Caco-2 (cell line): ENCODE measurements at regions of chrX and their contacts with region 1.

Region 1: DNA sequence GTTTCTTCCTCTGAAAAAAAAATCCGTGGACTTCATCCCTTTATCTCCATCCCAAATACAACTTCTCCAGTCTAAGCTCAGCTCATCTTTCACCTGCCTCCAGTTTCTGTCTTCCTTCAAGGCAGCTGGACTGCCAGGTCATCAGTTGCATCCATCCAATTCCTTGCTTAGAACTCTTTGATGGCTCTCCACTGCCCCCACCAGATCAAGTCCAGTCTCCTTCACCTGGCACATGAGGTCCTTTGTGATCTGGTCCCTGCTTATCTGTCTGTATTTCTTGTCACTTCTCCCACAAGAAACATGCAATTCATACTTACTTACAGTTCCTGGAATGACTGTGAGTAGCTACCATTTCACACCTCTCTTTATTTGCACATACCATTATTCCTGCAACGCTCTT is 33.8 kb downstream of the OTUD6A start:
- DNase-seq: peak in 1 of 2 experiments; percentile 2
- H3K4me3 ChIP-seq: no peak overlapping the region
- H3K4me3 Mint-ChIP-seq: no peak overlapping the region
- H3K27ac Mint-ChIP-seq: no peak overlapping the region
- H3K4me1 ChIP-seq: no peaks in the 10 kb centered on the region
- H3K4me1 Mint-ChIP-seq: no peaks in the 10 kb centered on the region
- H3K27me3 ChIP-seq: no peaks in the 10 kb centered on the region
- H3K27me3 Mint-ChIP-seq: peaks cover 5% of the 10 kb centered on the region
- CTCF ChIP-seq: no peak

Region 2: GRCh38 chrX:69493193-69493592 is 602.9 kb before region 1 on chrX:
- CTCF ChIA-PET with region 1: interaction called, 4 read pairs
- POLR2A ChIA-PET with region 1: no interaction called
- intact Hi-C with region 1: loop called (anchors 5 kb)
- DNase-seq: peak; percentile 42 to 64
- H3K4me3 ChIP-seq: no peak overlapping the region
- H3K4me3 Mint-ChIP-seq: no peak overlapping the region
- H3K27ac Mint-ChIP-seq: no peak overlapping the region
- H3K4me1 ChIP-seq: no peaks in the 10 kb centered on the region
- H3K4me1 Mint-ChIP-seq: no peaks in the 10 kb centered on the region
- H3K27me3 ChIP-seq: no peaks in the 10 kb centered on the region; the same call in 1 of the 2 replicates
- H3K27me3 Mint-ChIP-seq: peaks cover 8% of the 10 kb centered on the region
- CTCF ChIP-seq: peak; percentile 35 to 53